Heart right ventricle (tissue), 16 donors: ENCODE measurements at regions of chr12 and their contacts with region 1.

Region 1: GRCh38 chr12:103840876-103841689 is at the start of gene NT5DC3:
- DNase-seq: peak; percentile 68 to 88
- ATAC-seq: peak; percentile 94 to 98 (median 96)
- H3K4me3 ChIP-seq: peak within 1 kb of the TSS; percentile 60 to 94 (median 72)
- H3K27ac ChIP-seq: peak within 1 kb of the TSS; percentile 82 to 94 (median 88)
- H3K4me1 ChIP-seq: peaks cover 0 to 25% (median 8%) of the 10 kb centered on the region in 9 donors
- H3K27me3 ChIP-seq: no peaks in the 10 kb centered on the region
- CTCF ChIP-seq: peak in 3 of 9 donors; percentile 3 to 16 (median 4)
- total RNA-seq, gene NT5DC3: 2.5 to 4.9 (median 3.8) TPM

Region 2: GRCh38 chr12:103680591-103681141 is 160.4 kb before region 1 on chr12:
- intact Hi-C with region 1: loop called in 1 of 10 experiments (anchors 5 kb)
- DNase-seq: peak; percentile 52 to 55
- ATAC-seq: peak; percentile 81 to 95 (median 92)
- H3K4me3 ChIP-seq: no peak overlapping the region
- H3K27ac ChIP-seq: peak overlapping the region in 5 of 10 donors; percentile 21 to 53 (median 42)
- H3K4me1 ChIP-seq: peaks cover 0 to 21% (median 11%) of the 10 kb centered on the region in 9 donors
- H3K27me3 ChIP-seq: peaks cover 0 to 8% (median 0%) of the 10 kb centered on the region in 7 donors
- CTCF ChIP-seq: no peak